HepG2 (cell line): ENCODE measurements at regions of chr20 and their contacts with region 1.

Region 1: GRCh38 chr20:36872852-36873251 is 3.1 kb upstream of the TLDC2 start:
- DNase-seq: no peak
- ATAC-seq: no peak
- H3K4me3 ChIP-seq: peak overlapping the region in 1 of 3 experiments; percentile 64; a peak in 1 of 6 replicates
- H3K27ac ChIP-seq: no peak overlapping the region
- H3K4me1 ChIP-seq: peaks cover 63% of the 10 kb centered on the region
- H3K27me3 ChIP-seq: no peaks in the 10 kb centered on the region
- CTCF ChIP-seq: no peak
- EP300 ChIP-seq: no peak
- POLR2A ChIP-seq: no peak
- RAD21 ChIP-seq: no peak

Region 2: GRCh38 chr20:36835453-36836198 is 37.2 kb before region 1 on chr20:
- CTCF ChIA-PET with region 1: no interaction called
- POLR2A ChIA-PET with region 1: interaction called, 3 read pairs
- in situ Hi-C with region 1: no loop called
- intact Hi-C with region 1: loop called (anchors 5 kb)
- DNase-seq: no peak
- ATAC-seq: no peak
- H3K4me3 ChIP-seq: no peak overlapping the region
- H3K27ac ChIP-seq: no peak overlapping the region
- H3K4me1 ChIP-seq: peaks cover 17% of the 10 kb centered on the region; the same call in 1 of the 2 replicates
- H3K27me3 ChIP-seq: no peaks in the 10 kb centered on the region
- CTCF ChIP-seq: no peak
- EP300 ChIP-seq: no peak
- POLR2A ChIP-seq: no peak
- RAD21 ChIP-seq: no peak

Region 3: DNA sequence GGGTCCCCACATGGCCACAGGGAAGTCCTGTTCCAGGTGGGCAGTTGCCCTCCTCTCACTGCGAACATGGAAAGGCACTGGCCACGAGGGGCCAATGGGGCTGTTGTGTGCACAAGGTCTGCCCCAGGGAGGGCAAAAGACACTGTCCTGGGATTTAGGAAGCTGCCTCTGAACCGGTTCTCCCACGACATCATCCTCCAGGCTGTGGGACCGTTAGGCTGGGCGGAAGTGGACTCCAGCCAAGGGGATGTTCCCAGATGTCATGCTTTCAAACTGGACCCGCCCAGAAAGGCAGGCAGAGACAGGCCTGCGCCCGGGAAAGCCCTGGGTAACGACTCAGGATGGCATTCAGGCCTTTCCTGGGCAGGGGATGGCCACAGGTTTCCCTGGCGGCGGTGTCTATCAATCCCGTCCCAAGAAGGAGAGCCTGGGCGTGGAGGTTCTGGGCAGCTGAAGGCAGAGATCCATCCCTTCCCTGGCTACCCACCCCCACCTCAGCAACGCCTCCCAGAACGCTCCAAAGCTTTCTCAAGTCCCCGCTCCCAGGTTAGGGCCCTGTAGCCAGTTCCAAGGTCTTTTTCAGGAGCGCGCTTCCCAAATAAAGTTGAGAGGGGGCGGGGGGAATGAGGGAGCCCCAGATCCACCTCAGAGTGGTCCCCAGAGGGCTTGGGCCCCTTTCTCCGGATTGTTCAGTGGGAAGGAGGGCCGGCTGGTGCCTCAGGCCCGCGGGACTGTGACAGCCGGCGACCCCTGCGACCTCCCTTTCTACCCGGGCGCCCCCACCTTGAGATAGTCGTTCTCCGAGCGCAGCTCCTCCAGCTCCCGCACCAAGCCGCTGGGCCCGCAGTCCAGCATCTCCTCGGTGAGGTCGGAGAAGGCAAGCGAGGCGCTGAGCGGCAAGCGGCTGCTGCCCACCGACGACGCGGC is 10.7 kb before region 1 on chr20:
- CTCF ChIA-PET with region 1: no interaction called
- POLR2A ChIA-PET with region 1: interaction called, 39 read pairs
- in situ Hi-C with region 1: no loop called
- intact Hi-C with region 1: loop called (anchors 1 kb)
- DNase-seq: peak; percentile 87
- ATAC-seq: peak; percentile 63
- H3K4me3 ChIP-seq: peak overlapping the region; percentile 68 to 86 (median 73)
- H3K27ac ChIP-seq: peak overlapping the region; percentile 36
- H3K4me1 ChIP-seq: peaks cover 68% of the 10 kb centered on the region
- H3K27me3 ChIP-seq: peaks cover 1 to 17% of the 10 kb centered on the region in 2 experiments; a peak in 1 of 5 replicates
- CTCF ChIP-seq: 0 out of 2 replicates have a peak, but pooled peaks have one; percentile 8
- EP300 ChIP-seq: no peak; a peak in 1 of 4 replicates
- POLR2A ChIP-seq: peak; percentile 83 to 86
- RAD21 ChIP-seq: no peak

Region 4: DNA sequence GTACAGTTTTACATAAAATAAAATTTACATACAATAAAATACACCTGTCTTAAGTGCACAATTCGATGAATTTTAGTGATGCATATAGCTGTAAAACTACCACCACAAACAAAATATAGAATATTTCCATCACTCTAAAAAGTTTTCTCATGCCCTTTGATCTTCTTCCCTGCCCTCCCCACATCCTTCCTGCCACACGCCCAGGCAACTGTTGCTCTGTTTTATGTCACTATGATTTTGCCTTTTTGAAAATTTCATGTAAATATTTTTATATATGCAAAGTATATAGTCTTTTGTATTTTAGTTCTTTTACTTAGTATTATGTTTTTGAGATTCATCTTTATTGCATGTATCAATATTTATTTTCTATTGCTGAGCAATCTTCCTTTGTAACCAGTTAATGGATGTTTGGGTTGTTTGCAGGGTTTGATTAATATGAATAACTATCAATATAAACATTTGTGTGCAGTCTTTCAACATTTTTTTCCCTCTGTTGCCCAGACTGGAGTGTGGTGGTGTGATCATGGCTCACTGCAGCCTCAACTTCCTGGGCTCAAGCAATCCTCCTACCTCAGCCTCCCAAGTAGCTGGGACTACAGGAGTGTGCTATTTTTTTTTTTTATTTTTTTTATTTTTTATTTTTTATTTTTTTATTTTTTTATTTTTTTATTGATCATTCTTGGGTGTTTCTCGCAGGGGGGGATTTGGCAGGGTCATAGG is 102.4 kb after region 1 on chr20:
- CTCF ChIA-PET with region 1: no interaction called
- POLR2A ChIA-PET with region 1: no interaction called
- in situ Hi-C with region 1: no loop called
- intact Hi-C with region 1: no loop called
- DNase-seq: no peak
- ATAC-seq: no peak
- H3K4me3 ChIP-seq: no peak overlapping the region
- H3K27ac ChIP-seq: no peak overlapping the region
- H3K4me1 ChIP-seq: peaks cover 10% of the 10 kb centered on the region
- H3K27me3 ChIP-seq: no peaks in the 10 kb centered on the region
- CTCF ChIP-seq: no peak
- EP300 ChIP-seq: no peak
- POLR2A ChIP-seq: no peak
- RAD21 ChIP-seq: no peak

Region 5: GRCh38 chr20:37042986-37043972 is 170.4 kb after region 1 on chr20:
- CTCF ChIA-PET with region 1: no interaction called
- POLR2A ChIA-PET with region 1: no interaction called
- in situ Hi-C with region 1: no loop called
- intact Hi-C with region 1: no loop called
- DNase-seq: no peak
- ATAC-seq: no peak
- H3K4me3 ChIP-seq: no peak overlapping the region
- H3K27ac ChIP-seq: no peak overlapping the region
- H3K4me1 ChIP-seq: no peaks in the 10 kb centered on the region
- H3K27me3 ChIP-seq: no peaks in the 10 kb centered on the region
- CTCF ChIP-seq: no peak
- EP300 ChIP-seq: no peak
- POLR2A ChIP-seq: no peak
- RAD21 ChIP-seq: no peak